Cardiac septum (tissue), 1 donor: ENCODE measurements at regions of chr17 and their contacts with region 1.

Region 1: GRCh38 chr17:72126563-72127486 is 6.0 kb downstream of the SOX9 start:
- DNase-seq: no peak

Region 2: GRCh38 chr17:72077326-72077960 is 49.4 kb before region 1 on chr17:
- intact Hi-C with region 1: no loop called
- DNase-seq: no peak

Region 3: GRCh38 chr17:72104164-72104862 is 22.5 kb before region 1 on chr17:
- intact Hi-C with region 1: no loop called
- DNase-seq: no peak

Region 4: GRCh38 chr17:72151565-72152391 is 25.0 kb after region 1 on chr17:
- intact Hi-C with region 1: loop called (anchors 2 kb)
- DNase-seq: no peak